GM10248 (cell line): ENCODE measurements at regions of chr11 and their contacts with region 1.

Region 1: DNA sequence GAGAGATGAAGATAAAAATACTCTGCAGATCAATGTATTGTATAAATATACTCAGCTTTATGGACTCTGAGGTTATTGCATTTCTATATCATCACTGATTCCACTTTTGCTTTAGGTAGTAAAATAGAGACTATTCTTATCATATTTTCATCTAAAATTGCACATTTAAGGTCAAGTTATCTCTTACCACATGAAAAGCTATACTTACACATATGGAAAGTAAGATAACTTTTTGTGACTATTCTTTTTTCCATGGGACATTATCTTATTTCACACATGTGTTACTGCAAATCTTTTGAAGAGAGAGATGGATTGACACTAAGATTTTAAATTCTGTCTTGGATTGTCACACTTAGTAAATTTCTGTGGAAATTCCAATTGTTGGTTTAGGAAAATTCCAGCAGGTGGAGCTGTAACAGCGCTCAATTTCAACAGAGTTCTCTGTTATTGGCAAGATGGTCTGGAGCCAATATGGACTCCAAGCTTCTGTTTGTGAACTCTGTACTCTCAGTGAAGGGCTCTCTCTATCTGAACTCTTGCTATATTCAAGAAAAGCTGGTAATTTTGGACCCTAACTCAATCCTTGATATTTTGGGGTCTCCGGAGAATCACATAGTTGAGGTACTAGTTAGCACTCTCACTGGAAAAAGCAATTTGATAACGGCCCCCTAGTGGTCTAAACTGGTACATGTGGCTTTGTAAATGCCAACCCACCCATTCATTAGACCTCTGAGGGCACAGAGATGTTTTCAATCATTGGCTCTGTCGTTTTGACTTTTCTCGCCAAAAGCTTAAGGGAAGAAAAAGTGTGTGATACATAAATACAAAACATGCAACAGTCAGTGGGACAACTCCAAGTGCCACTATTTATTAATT is 429.7 kb downstream of the ETS1 start:
- DNase-seq: peak; percentile 43
- CTCF ChIP-seq: peak; percentile 56

Region 2: DNA sequence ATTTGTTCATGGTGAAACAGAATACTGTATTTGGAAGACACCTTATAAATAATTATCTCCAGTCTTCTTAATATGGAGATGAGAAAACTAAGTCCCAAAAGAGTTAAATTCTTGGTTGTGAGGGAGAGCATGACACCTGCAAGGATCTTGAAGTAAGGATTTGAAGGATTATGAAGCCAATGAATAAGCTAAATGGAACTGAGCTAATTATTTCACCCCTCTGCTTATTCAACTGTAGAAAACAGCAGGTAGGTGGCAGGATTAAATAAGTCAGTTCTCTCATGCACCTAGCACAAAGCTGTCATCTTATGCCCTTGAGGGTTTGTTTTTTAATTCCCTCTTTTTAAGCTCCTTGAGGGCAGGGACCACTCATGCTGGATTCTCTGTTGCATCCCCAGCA is 27.6 kb before region 1 on chr11:
- CTCF ChIA-PET with region 1: interaction called, 10 read pairs
- POLR2A ChIA-PET with region 1: no interaction called
- DNase-seq: no peak
- CTCF ChIP-seq: no peak

Region 3: GRCh38 chr11:128172046-128172878 is 14.6 kb after region 1 on chr11:
- CTCF ChIA-PET with region 1: interaction called, 120 read pairs
- POLR2A ChIA-PET with region 1: no interaction called
- DNase-seq: peak; percentile 78
- CTCF ChIP-seq: peak; percentile 84

Region 4: GRCh38 chr11:128630367-128631230 is 472.9 kb after region 1 on chr11:
- CTCF ChIA-PET with region 1: interaction called, 48 read pairs
- POLR2A ChIA-PET with region 1: no interaction called
- DNase-seq: peak; percentile 77
- CTCF ChIP-seq: peak; percentile 79

Region 5: DNA sequence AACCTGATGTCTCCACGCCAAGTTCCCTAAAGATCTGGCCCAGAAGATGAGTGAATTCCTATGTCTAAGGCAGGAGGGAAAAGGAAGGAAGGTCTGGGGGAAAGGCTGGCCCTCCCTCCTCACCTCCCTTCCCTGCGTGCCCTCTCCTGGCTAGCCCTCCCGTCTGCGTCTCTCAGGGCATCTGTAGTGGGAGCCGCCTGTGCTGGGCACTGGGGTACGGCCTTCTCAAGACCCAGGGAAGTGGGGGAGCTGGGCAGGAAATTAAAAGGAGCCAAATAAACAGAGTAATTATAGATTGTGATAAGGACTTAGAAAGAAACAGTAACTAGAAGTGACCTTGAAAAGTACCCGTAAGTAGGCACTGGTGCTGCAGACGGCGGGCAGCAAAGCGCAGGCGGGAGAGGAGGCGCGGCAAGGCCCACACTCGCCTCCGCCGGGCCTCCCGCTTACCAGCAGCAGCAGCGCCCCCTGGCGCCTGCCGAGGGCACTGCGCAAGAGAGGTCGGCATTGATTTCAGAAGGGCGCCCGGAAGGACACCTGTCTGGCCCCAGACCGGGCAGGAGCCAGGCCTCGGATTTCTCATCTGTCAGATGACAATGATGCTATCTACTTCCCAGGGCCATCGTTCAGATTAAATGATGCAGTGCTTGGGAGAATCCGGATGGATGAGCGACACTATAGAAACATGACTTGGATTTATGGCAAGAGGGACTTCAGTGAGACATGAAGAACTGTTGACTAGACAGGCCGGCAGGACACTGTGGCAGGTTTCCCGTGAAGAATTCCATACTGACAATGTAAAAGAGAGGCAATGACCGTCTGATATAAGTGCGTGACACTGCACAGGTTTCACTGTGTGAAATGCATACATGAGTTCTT is 702.1 kb after region 1 on chr11:
- CTCF ChIA-PET with region 1: interaction called, 35 read pairs
- POLR2A ChIA-PET with region 1: no interaction called
- DNase-seq: peak; percentile 86
- CTCF ChIP-seq: peak; percentile 94